PC-9 (cell line): ENCODE measurements at regions of chr7 and their contacts with region 1.

Region 1: DNA sequence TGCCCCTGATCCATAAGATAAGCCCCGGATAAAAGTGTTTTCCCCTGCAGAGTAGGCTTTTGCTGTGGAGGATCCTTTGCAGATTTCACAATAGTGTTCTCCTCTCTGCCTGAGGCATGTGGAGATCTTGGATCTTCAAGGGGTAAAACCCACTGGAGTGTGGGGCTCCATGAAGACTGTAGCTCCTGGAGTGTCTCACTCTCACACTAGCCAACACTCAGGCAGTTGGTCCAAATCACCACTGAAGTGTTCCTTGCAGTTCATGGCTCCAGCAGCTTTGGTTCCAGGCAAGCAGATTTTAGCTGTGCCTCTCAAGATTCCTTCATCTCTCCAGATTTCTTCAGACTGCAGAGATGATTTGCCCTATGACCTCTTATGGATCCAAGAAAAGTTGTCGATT is 665.3 kb downstream of the TNS3 start:
- DNase-seq: no peak
- H3K4me3 ChIP-seq: no peak overlapping the region
- H3K27ac ChIP-seq: no peak overlapping the region
- H3K4me1 ChIP-seq: no peaks in the 10 kb centered on the region
- H3K27me3 ChIP-seq: no peaks in the 10 kb centered on the region
- CTCF ChIP-seq: no peak

Region 2: DNA sequence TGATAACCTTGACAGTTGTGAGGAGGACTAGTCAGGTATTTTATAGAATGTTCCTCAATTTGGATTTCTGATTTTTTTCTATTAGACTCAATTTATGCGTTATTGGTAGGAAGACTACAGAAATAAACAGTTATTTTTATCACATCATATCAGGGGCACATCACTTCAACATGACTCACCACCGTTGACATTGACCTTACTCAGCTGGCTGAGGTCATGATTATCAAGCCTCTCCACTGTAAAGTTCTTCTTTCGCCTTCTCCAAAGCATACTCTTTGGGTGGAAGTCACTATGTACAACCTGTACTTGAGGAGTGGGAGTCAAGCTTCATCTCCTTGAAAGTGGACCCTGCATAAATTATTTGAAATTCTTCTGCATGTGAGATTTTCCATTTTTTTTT is 801.2 kb before region 1 on chr7:
- CTCF ChIA-PET with region 1: interaction called, 10 read pairs
- POLR2A ChIA-PET with region 1: no interaction called
- intact Hi-C with region 1: no loop called
- DNase-seq: no peak
- H3K4me3 ChIP-seq: no peak overlapping the region
- H3K27ac ChIP-seq: no peak overlapping the region
- H3K4me1 ChIP-seq: no peaks in the 10 kb centered on the region
- H3K27me3 ChIP-seq: no peaks in the 10 kb centered on the region
- CTCF ChIP-seq: no peak